IMR-90 (cell line): ENCODE measurements at regions of chr2 and their contacts with region 1.

Region 1: GRCh38 chr2:60976875-60977561 is 40.5 kb upstream of the PEX13 start:
- DNase-seq: no peak
- ATAC-seq: no peak
- H3K4me3 ChIP-seq: no peak overlapping the region
- H3K27ac ChIP-seq: no peak overlapping the region
- H3K4me1 ChIP-seq: no peaks in the 10 kb centered on the region; the same call in 1 of the 2 replicates
- H3K27me3 ChIP-seq: no peaks in the 10 kb centered on the region
- CTCF ChIP-seq: no peak
- POLR2A ChIP-seq: no peak
- RAD21 ChIP-seq: no peak

Region 2: DNA sequence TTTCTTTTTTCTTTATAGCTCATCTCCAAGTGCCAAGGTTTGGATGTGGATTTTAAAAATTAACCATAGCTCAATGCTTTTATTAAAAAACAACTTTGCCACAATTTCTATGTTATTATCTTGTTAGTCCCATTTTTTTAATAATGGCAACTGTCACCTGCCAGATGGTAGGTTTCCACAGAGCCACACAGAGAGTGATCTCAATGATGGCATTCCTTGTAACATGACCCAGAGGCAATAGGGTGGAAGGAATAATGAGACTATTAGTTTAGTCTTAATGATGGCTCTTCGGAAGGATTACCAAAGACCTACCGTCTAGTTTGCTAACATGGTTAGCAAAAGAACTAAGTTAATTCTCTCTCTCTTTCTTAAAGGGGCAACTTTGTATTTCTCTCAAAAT is 31.7 kb before region 1 on chr2:
- CTCF ChIA-PET with region 1: no interaction called
- POLR2A ChIA-PET with region 1: no interaction called
- dilution Hi-C with region 1: no loop called
- in situ Hi-C with region 1: no loop called
- intact Hi-C with region 1: loop called (anchors 1 kb)
- DNase-seq: no peak
- ATAC-seq: no peak
- H3K4me3 ChIP-seq: no peak overlapping the region
- H3K27ac ChIP-seq: no peak overlapping the region
- H3K4me1 ChIP-seq: no peaks in the 10 kb centered on the region
- H3K27me3 ChIP-seq: no peaks in the 10 kb centered on the region
- CTCF ChIP-seq: no peak
- POLR2A ChIP-seq: no peak
- RAD21 ChIP-seq: no peak